H1 (cell line): ENCODE measurements at regions of chr10 and their contacts with region 1.

Region 1: GRCh38 chr10:48289501-48290238 is 15.2 kb upstream of the FRMPD2 start:
- DNase-seq: peak in 1 of 2 experiments; percentile 88
- H3K4me3 ChIP-seq: no peak overlapping the region
- H3K27ac ChIP-seq: no peak overlapping the region
- H3K4me1 ChIP-seq: no peaks in the 10 kb centered on the region
- H3K27me3 ChIP-seq: no peaks in the 10 kb centered on the region
- CTCF ChIP-seq: peak; percentile 86 to 90 (median 89)
- EP300 ChIP-seq: no peak
- POLR2A ChIP-seq: no peak
- RAD21 ChIP-seq: peak; percentile 79 to 83

Region 2: GRCh38 chr10:48215488-48216204 is 74.0 kb before region 1 on chr10:
- CTCF ChIA-PET with region 1: interaction called, 15 read pairs
- POLR2A ChIA-PET with region 1: no interaction called
- DNase-seq: peak; percentile 34 to 82
- H3K4me3 ChIP-seq: no peak overlapping the region
- H3K27ac ChIP-seq: no peak overlapping the region
- H3K4me1 ChIP-seq: no peaks in the 10 kb centered on the region
- H3K27me3 ChIP-seq: 0 out of 7 replicates have a peak, but pooled peaks cover 0 to under 1% (median 0%) of the 10 kb centered on the region in 4 experiments
- CTCF ChIP-seq: peak; percentile 70 to 86 (median 85)
- EP300 ChIP-seq: no peak
- POLR2A ChIP-seq: no peak
- RAD21 ChIP-seq: peak; percentile 73 to 85

Region 3: DNA sequence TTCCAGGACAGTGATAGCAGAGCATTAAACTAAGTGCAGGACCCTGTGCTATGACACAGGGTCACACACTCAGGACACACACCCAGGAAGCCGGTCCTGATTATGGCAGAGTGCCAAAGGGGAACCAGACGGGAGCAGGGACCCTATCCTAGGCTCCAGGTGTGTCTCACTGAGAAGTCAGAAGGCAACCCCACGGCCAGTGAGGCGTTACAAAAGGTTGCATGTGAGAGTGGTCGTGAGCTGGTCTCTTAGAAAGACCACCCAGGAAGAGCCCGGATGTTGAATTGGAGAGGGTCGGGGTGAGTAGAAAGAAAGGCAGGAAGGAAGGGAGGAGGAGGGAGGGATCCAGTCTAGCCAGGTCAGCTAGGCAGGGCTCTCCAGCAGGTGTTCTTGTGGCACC is 46.2 kb before region 1 on chr10:
- CTCF ChIA-PET with region 1: interaction called, 17 read pairs
- POLR2A ChIA-PET with region 1: no interaction called
- DNase-seq: peak in 1 of 2 experiments; percentile 46
- H3K4me3 ChIP-seq: no peak overlapping the region
- H3K27ac ChIP-seq: no peak overlapping the region
- H3K4me1 ChIP-seq: peaks cover 0 to 2% (median 0%) of the 10 kb centered on the region in 4 experiments; a peak in 1 of 7 replicates
- H3K27me3 ChIP-seq: no peaks in the 10 kb centered on the region
- CTCF ChIP-seq: no peak
- EP300 ChIP-seq: no peak
- POLR2A ChIP-seq: no peak
- RAD21 ChIP-seq: no peak

Region 4: DNA sequence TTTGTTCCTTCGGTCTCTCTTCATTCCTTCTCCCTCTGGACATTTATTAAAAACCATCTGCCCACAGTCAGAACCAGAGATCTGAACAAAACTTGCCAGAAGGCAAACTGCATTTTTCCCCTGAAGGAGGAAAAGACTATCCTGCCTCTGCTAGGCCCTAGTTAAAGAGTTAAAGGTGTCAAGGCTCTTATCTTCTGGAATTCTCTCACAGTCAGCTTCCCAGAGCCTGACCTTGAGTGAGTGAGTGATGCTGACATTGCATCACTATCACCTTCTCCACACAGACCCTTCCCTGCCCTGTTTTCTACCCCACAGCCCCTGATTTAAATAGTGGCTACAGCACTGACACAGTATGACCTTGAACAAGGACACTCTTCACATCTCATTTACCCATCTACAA is 31.6 kb before region 1 on chr10:
- CTCF ChIA-PET with region 1: no interaction called
- POLR2A ChIA-PET with region 1: no interaction called
- DNase-seq: peak in 1 of 2 experiments; percentile 24
- H3K4me3 ChIP-seq: no peak overlapping the region
- H3K27ac ChIP-seq: no peak overlapping the region
- H3K4me1 ChIP-seq: peaks cover 0 to 2% (median 0%) of the 10 kb centered on the region in 4 experiments; a peak in 2 of 7 replicates
- H3K27me3 ChIP-seq: no peaks in the 10 kb centered on the region; a peak in 1 of 7 replicates
- CTCF ChIP-seq: no peak
- EP300 ChIP-seq: no peak
- POLR2A ChIP-seq: no peak
- RAD21 ChIP-seq: no peak

Region 5: DNA sequence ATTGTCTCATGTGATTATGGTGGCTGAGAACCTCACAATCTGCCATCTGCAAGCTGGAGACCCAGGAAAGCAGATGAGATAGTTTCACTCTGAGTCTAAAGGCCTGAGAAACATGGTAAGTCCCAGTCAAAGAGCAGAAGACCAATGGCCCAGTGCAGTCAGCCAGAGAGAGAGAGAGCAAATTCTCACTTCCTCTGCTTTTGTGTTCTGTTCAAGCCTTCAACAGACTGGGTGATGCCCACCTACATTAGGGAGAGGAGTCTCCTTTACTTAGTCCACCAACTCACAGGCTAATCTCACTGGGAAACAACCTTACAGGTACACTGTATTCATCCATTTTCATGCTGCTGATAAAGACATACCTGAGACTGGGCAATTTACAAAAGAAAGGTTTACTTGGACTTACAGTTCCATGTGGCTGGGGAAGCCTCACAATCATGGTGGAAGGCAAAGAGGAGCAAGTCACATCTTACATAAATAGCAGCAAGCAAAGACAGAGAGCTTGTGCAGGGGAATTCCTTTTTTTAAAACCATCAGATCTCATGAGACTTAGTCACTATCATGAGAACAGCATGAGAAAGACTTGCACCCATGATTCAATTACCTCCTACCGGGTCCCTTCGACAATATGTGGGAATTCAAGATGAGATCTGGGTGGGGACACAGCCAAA is 10.5 kb before region 1 on chr10:
- CTCF ChIA-PET with region 1: interaction called, 27 read pairs
- POLR2A ChIA-PET with region 1: no interaction called
- DNase-seq: no peak
- H3K4me3 ChIP-seq: no peak overlapping the region
- H3K27ac ChIP-seq: no peak overlapping the region
- H3K4me1 ChIP-seq: peaks cover 0 to 7% (median 0%) of the 10 kb centered on the region in 4 experiments; a peak in 2 of 7 replicates
- H3K27me3 ChIP-seq: no peaks in the 10 kb centered on the region
- CTCF ChIP-seq: no peak
- EP300 ChIP-seq: no peak
- POLR2A ChIP-seq: no peak
- RAD21 ChIP-seq: no peak

Region 6: DNA sequence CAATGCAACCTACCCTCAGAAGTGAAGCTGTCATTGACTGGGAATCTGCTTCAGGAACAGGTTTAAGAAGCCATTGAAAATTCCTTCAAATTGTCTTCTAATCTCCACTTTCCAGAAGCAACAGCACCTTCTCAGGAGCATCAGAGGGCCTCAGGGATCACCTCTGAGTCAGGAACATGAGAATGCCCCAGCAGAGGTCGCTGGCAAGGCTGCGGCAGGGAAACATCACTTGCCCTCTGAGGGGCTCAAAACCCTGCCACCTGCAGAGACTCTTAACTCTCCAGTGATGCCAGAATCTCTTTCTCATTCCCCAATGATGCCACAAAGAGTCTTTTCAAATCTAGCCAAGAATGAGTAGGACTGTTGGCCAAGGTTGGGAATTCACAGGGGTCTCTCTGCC is 10.9 kb after region 1 on chr10:
- CTCF ChIA-PET with region 1: interaction called, 21 read pairs
- POLR2A ChIA-PET with region 1: no interaction called
- DNase-seq: no peak
- H3K4me3 ChIP-seq: no peak overlapping the region
- H3K27ac ChIP-seq: no peak overlapping the region
- H3K4me1 ChIP-seq: no peaks in the 10 kb centered on the region; a peak in 2 of 7 replicates
- H3K27me3 ChIP-seq: no peaks in the 10 kb centered on the region
- CTCF ChIP-seq: peak in 2 of 3 experiments; percentile 13 to 41; a peak in 2 of 4 replicates
- EP300 ChIP-seq: no peak
- POLR2A ChIP-seq: no peak
- RAD21 ChIP-seq: peak in 1 of 2 experiments; percentile 10; a peak in 1 of 4 replicates